Panc1 (cell line): ENCODE measurements at regions of chr1 and their contacts with region 1.

Region 1: GRCh38 chr1:68213843-68214242 is 18.5 kb downstream of the WLS start:
- DNase-seq: no peak
- ATAC-seq: no peak
- H3K4me3 ChIP-seq: no peak overlapping the region
- H3K27ac ChIP-seq: no peak overlapping the region
- H3K4me1 ChIP-seq: no peaks in the 10 kb centered on the region
- H3K27me3 ChIP-seq: no peaks in the 10 kb centered on the region
- CTCF ChIP-seq: no peak

Region 2: DNA sequence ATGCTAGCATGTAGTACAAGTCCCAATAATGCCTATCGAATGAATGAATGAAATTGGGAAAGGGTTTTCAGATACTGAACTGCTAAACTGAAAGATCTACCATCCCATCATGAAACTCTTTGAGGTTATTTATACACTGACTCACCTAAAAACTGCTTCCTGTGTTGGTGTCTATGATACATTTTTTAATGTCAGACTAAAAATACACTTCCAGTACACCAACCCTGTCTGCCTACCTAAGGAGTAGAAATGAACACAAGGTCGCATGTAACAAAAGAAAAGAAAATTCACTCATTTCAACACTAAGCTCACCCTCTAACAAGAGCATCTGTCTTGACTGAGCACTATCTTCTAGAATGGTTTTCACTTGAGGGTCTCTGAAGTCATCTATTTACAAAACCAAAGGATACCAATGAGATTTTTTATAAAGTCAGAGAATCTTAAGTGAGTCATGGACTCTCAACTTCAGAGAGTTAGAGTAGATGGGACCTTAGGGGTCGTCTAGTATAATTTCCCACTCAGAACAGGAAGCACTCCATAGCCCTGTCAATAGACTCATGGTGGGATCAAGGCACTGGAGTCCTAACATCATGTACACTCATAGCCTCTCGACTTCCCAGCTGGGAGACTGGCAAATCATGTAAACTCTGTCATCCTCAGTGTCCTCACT is 34.9 kb before region 1 on chr1:
- CTCF ChIA-PET with region 1: no interaction called
- POLR2A ChIA-PET with region 1: no interaction called
- in situ Hi-C with region 1: no loop called
- intact Hi-C with region 1: no loop called
- DNase-seq: peak; percentile 67
- ATAC-seq: no peak
- H3K4me3 ChIP-seq: no peak overlapping the region
- H3K27ac ChIP-seq: no peak overlapping the region
- H3K4me1 ChIP-seq: peaks cover 3% of the 10 kb centered on the region; the same call in 1 of the 2 replicates
- H3K27me3 ChIP-seq: no peaks in the 10 kb centered on the region
- CTCF ChIP-seq: no peak

Region 3: DNA sequence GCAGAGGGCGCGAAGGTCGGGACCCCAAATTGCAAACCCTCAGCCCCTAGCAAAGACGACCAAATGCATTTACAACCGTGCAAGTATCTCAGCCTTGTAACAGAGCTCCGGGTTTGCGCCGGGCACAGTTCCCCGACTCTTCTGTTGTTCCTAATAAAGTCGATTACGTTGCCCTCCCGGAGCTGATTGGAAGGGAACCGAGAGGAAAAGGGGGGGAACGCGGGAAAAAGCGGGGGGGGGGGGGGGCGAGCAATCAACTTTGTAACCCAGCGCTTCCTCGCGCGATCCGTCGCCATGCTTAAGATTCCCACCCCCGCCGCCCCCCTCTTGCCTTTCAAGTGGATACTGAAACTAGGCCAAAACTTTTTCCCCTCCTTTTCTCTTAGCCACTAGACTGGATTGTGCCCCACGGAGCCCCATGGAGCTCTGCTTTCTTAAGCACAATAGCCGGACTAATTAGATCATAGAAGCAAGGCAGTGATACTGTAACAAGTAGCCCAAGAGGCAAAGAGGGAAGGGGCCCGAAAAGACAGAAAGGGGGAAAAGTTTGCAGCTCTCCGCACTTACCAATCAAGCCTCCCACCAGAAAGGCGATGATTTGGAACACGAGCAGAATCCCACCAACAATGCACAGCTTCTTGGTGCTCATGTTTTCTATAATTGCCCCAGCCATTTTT is 17.9 kb after region 1 on chr1:
- CTCF ChIA-PET with region 1: no interaction called
- POLR2A ChIA-PET with region 1: interaction called, 11 read pairs
- in situ Hi-C with region 1: no loop called
- intact Hi-C with region 1: no loop called
- DNase-seq: no peak
- ATAC-seq: peak; percentile 68
- H3K4me3 ChIP-seq: peak overlapping the region; percentile 47 to 92
- H3K27ac ChIP-seq: peak overlapping the region; percentile 48; the same call in 1 of the 2 replicates
- H3K4me1 ChIP-seq: peaks cover 4% of the 10 kb centered on the region; the same call in 1 of the 2 replicates
- H3K27me3 ChIP-seq: peaks cover 4% of the 10 kb centered on the region; the same call in 1 of the 2 replicates
- CTCF ChIP-seq: no peak